CD4-positive, alpha-beta T cell (primary cell): ENCODE measurements at regions of chr1 and their contacts with region 1.

Region 1: GRCh38 chr1:23184212-23184934 is 15.7 kb upstream of the LUZP1 start:
- DNase-seq: peak in 12 of 14 experiments; percentile 8 to 81 (median 34)
- ATAC-seq: peak; percentile 48
- H3K4me3 ChIP-seq: peak overlapping the region; percentile 26
- H3K4me3 Mint-ChIP-seq: peak overlapping the region; percentile 38
- H3K27ac ChIP-seq: no peak overlapping the region
- H3K27ac Mint-ChIP-seq: no peak overlapping the region
- H3K4me1 ChIP-seq: peaks cover 11% of the 10 kb centered on the region
- H3K4me1 Mint-ChIP-seq: peaks cover 10% of the 10 kb centered on the region
- H3K27me3 ChIP-seq: no peaks in the 10 kb centered on the region
- H3K27me3 Mint-ChIP-seq: peaks cover 5% of the 10 kb centered on the region
- CTCF ChIP-seq: peak; percentile 97

Region 2: DNA sequence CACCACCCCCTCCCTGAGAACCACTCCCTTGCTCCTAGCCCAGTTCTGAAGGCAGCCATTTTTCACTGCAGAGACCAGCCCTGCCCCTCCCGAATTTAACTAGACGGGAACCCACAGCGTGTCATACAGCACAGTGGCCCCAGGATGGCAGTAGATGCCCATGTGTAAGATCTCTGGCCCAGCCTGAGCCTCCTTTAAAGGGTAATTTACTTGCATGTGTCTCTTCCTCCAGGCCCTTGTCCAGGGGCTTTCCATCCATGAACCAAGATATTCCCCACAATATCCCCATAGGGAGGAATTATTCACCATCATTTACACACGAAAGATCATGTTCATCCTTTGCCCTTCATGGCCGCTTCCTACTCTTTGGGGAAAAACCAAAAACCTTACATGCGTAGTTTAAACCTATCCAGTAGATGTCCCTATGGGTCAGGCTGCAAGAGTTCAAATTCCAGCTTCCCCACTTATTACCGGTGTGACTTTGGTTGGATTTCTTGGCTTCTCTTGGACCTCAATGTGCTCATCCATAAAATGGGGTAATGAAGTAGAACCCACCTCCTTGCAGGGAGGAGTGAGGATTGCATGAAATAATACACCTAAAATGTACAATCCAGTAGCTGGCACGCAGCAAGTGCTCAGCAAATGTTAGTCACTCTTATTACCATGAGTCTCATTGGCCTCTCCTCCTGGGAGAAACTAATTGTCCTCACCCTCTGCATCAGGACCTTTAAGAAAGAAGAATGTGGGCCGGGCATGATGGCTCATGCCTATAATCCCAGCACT is 207.7 kb before region 1 on chr1:
- CTCF ChIA-PET with region 1: no interaction called
- POLR2A ChIA-PET with region 1: no interaction called
- intact Hi-C with region 1: loop called in 1 of 2 experiments (anchors 10 kb)
- DNase-seq: peak; percentile 9 to 72 (median 29)
- ATAC-seq: peak; percentile 83
- H3K4me3 ChIP-seq: no peak overlapping the region
- H3K4me3 Mint-ChIP-seq: no peak overlapping the region
- H3K27ac ChIP-seq: no peak overlapping the region
- H3K27ac Mint-ChIP-seq: no peak overlapping the region
- H3K4me1 ChIP-seq: no peaks in the 10 kb centered on the region
- H3K4me1 Mint-ChIP-seq: no peaks in the 10 kb centered on the region
- H3K27me3 ChIP-seq: peaks cover 7% of the 10 kb centered on the region in 2 experiments
- H3K27me3 Mint-ChIP-seq: peaks cover 39% of the 10 kb centered on the region
- CTCF ChIP-seq: peak; percentile 11

Region 3: GRCh38 chr1:23108918-23109533 is 75.3 kb before region 1 on chr1:
- CTCF ChIA-PET with region 1: interaction called, 14 read pairs
- POLR2A ChIA-PET with region 1: interaction called, 9 read pairs
- intact Hi-C with region 1: no loop called
- DNase-seq: peak in 2 of 14 experiments; percentile 19 to 37
- ATAC-seq: no peak
- H3K4me3 ChIP-seq: no peak overlapping the region
- H3K4me3 Mint-ChIP-seq: no peak overlapping the region
- H3K27ac ChIP-seq: peak overlapping the region in 1 of 2 donors; percentile 8
- H3K27ac Mint-ChIP-seq: peak overlapping the region; percentile 32
- H3K4me1 ChIP-seq: peaks cover 31% of the 10 kb centered on the region
- H3K4me1 Mint-ChIP-seq: peaks cover 37% of the 10 kb centered on the region
- H3K27me3 ChIP-seq: no peaks in the 10 kb centered on the region
- H3K27me3 Mint-ChIP-seq: no peaks in the 10 kb centered on the region
- CTCF ChIP-seq: no peak

Region 4: GRCh38 chr1:23163395-23163794 is 21.0 kb before region 1 on chr1:
- CTCF ChIA-PET with region 1: interaction called, 23 read pairs
- POLR2A ChIA-PET with region 1: interaction called, 3 read pairs
- intact Hi-C with region 1: no loop called
- DNase-seq: no peak
- ATAC-seq: no peak
- H3K4me3 ChIP-seq: no peak overlapping the region
- H3K4me3 Mint-ChIP-seq: no peak overlapping the region
- H3K27ac ChIP-seq: no peak overlapping the region
- H3K27ac Mint-ChIP-seq: no peak overlapping the region
- H3K4me1 ChIP-seq: peaks cover 12% of the 10 kb centered on the region
- H3K4me1 Mint-ChIP-seq: peaks cover 46% of the 10 kb centered on the region
- H3K27me3 ChIP-seq: no peaks in the 10 kb centered on the region
- H3K27me3 Mint-ChIP-seq: no peaks in the 10 kb centered on the region
- CTCF ChIP-seq: no peak